ENCODE measurements at regions of chr4 and their contacts with region 1.

Region 1: GRCh38 chr4:164058776-164059445 is 564.4 kb downstream of the TMA16 start:
- DNase-seq: no peak
- H3K4me3 ChIP-seq: no peak overlapping the region
- H3K27ac ChIP-seq: no peak overlapping the region
- H3K4me1 ChIP-seq: no peaks in the 10 kb centered on the region
- H3K27me3 ChIP-seq: no peaks in the 10 kb centered on the region
- CTCF ChIP-seq: no peak
- POLR2A ChIP-seq: no peak

Region 2: DNA sequence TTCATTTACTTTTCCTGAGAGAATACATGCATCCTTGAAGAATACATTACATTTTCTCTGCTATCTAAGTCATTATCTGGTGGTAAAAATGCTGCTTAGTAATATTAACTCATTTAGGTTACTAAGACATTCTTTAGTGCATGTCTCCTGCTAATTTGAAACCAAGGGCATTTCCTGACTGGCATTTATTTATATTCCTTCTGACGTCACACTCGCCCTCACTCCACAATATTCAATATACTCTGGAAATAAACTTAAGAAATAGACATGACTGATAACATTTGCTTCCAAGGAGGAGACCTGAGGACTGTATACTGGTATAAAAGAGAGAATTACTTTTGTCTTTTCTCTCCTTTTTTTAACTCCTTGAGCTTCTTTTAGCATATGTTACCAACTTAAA is 75.5 kb after region 1 on chr4:
- intact Hi-C with region 1: loop called (anchors 2 kb)
- DNase-seq: no peak
- H3K4me3 ChIP-seq: no peak overlapping the region
- H3K27ac ChIP-seq: no peak overlapping the region
- H3K4me1 ChIP-seq: no peaks in the 10 kb centered on the region
- H3K27me3 ChIP-seq: no peaks in the 10 kb centered on the region
- CTCF ChIP-seq: no peak
- POLR2A ChIP-seq: no peak

Region 3: GRCh38 chr4:164313853-164314252 is 254.9 kb after region 1 on chr4:
- intact Hi-C with region 1: no loop called
- DNase-seq: no peak
- H3K4me3 ChIP-seq: no peak overlapping the region
- H3K27ac ChIP-seq: no peak overlapping the region
- H3K4me1 ChIP-seq: no peaks in the 10 kb centered on the region
- H3K27me3 ChIP-seq: no peaks in the 10 kb centered on the region
- CTCF ChIP-seq: no peak
- POLR2A ChIP-seq: no peak

Measured in breast epithelium (tissue), 4 donors.